Ovary (tissue), 10 donors: ENCODE measurements at regions of chr12 and their contacts with region 1.

Region 1: GRCh38 chr12:56117778-56118687 is at the start of gene ZC3H10:
- DNase-seq: peak; percentile 96 to 99 (median 98)
- H3K4me3 ChIP-seq: peak within 1 kb of the TSS; percentile 77
- H3K27ac ChIP-seq: peak within 1 kb of the TSS; percentile 91 to 92
- H3K4me1 ChIP-seq: peaks cover 2% of the 10 kb centered on the region
- H3K27me3 ChIP-seq: no peaks in the 10 kb centered on the region
- CTCF ChIP-seq: peak; percentile 25 to 83 (median 79)
- EP300 ChIP-seq: peak; percentile 89
- POLR2A ChIP-seq: peak; percentile 98
- total RNA-seq, gene ZC3H10: 1.8 to 14.7 (median 10.7) TPM

Region 2: GRCh38 chr12:56158029-56158925 is 40.2 kb after region 1 on chr12 and contains the start of gene MYL6:
- intact Hi-C with region 1: loop called in 1 of 4 experiments (anchors 5 kb)
- DNase-seq: peak; percentile 93 to 98 (median 97)
- H3K4me3 ChIP-seq: peak within 1 kb of the TSS; percentile 97
- H3K27ac ChIP-seq: peak within 1 kb of the TSS; percentile 82 to 91
- H3K4me1 ChIP-seq: peaks cover 3% of the 10 kb centered on the region
- H3K27me3 ChIP-seq: no peaks in the 10 kb centered on the region
- CTCF ChIP-seq: peak in 2 of 3 donors; percentile 4 to 9
- EP300 ChIP-seq: no peak
- POLR2A ChIP-seq: peak; percentile 100
- total RNA-seq, gene MYL6: 782 to 1,485 (median 1,329) TPM

Region 3: GRCh38 chr12:56224102-56224701 is 106.2 kb after region 1 on chr12 and contains the start of gene NABP2:
- intact Hi-C with region 1: loop called in 3 of 4 experiments (anchors 2 to 10 kb)
- DNase-seq: peak; percentile 97 to 99 (median 98)
- H3K4me3 ChIP-seq: peak within 1 kb of the TSS; percentile 68
- H3K27ac ChIP-seq: peak within 1 kb of the TSS; percentile 73 to 75
- H3K4me1 ChIP-seq: peaks cover 5% of the 10 kb centered on the region
- H3K27me3 ChIP-seq: no peaks in the 10 kb centered on the region
- CTCF ChIP-seq: peak; percentile 84 to 98 (median 98)
- EP300 ChIP-seq: peak; percentile 54
- POLR2A ChIP-seq: peak; percentile 36
- total RNA-seq, gene NABP2: 19.8 to 43.7 (median 28.9) TPM

Region 4: GRCh38 chr12:57700317-57700716 is 1582.3 kb after region 1 on chr12:
- intact Hi-C with region 1: loop called in 1 of 4 experiments (anchors 5 kb)
- DNase-seq: no peak
- H3K4me3 ChIP-seq: no peak overlapping the region
- H3K27ac ChIP-seq: no peak overlapping the region
- H3K4me1 ChIP-seq: no peaks in the 10 kb centered on the region
- H3K27me3 ChIP-seq: no peaks in the 10 kb centered on the region
- CTCF ChIP-seq: no peak
- EP300 ChIP-seq: no peak
- POLR2A ChIP-seq: no peak